Prostate gland (tissue), 2 donors: ENCODE measurements at regions of chr22 and their contacts with region 1.

Region 1: GRCh38 chr22:20904008-20904979 is 12.9 kb upstream of the CRKL start:
- DNase-seq: no peak
- H3K4me3 ChIP-seq: no peak overlapping the region
- H3K27ac ChIP-seq: no peak overlapping the region
- H3K4me1 ChIP-seq: no peaks in the 10 kb centered on the region
- H3K27me3 ChIP-seq: no peaks in the 10 kb centered on the region
- CTCF ChIP-seq: no peak
- POLR2A ChIP-seq: no peak

Region 2: GRCh38 chr22:20509344-20510047 is 394.8 kb before region 1 on chr22:
- intact Hi-C with region 1: no loop called
- DNase-seq: peak; percentile 67
- H3K4me3 ChIP-seq: peak overlapping the region in 1 of 2 donors; percentile 92
- H3K27ac ChIP-seq: peak overlapping the region; percentile 93 to 94
- H3K4me1 ChIP-seq: peaks cover 15% of the 10 kb centered on the region
- H3K27me3 ChIP-seq: no peaks in the 10 kb centered on the region
- CTCF ChIP-seq: no peak
- POLR2A ChIP-seq: no peak

Region 3: DNA sequence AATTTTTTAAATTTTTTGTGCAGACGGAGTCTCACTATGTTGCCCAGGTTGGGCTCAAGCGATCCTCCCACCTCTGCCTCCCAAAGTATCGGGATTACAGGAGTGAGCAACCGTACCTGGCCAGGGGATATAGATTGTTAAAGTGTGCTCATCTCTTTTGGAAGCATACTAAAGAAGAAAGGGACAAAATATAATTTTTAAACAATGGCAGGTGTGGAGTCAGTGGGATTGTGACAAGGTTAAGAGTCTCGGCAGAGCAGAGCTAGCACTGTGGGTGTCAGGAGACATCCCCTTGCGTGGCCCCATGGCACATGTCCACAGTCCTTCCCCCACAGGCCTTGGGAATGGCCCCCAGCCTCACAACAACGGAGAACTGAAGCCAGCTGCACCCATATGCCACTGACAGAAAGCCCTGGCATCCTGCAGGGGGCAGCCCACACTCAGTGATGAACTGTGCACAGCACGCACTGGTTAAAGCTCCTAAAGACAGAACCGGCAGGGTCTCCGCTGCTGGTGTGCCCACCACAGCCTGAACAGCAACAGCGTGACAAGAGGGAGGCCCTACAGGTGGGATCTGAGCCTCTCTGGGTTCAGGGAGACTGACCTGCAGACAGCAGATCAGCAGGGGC is 100.5 kb before region 1 on chr22:
- intact Hi-C with region 1: no loop called
- DNase-seq: no peak
- H3K4me3 ChIP-seq: no peak overlapping the region
- H3K27ac ChIP-seq: no peak overlapping the region
- H3K4me1 ChIP-seq: no peaks in the 10 kb centered on the region
- H3K27me3 ChIP-seq: no peaks in the 10 kb centered on the region
- CTCF ChIP-seq: peak in 1 of 4 experiments; percentile 32
- POLR2A ChIP-seq: no peak

Region 4: DNA sequence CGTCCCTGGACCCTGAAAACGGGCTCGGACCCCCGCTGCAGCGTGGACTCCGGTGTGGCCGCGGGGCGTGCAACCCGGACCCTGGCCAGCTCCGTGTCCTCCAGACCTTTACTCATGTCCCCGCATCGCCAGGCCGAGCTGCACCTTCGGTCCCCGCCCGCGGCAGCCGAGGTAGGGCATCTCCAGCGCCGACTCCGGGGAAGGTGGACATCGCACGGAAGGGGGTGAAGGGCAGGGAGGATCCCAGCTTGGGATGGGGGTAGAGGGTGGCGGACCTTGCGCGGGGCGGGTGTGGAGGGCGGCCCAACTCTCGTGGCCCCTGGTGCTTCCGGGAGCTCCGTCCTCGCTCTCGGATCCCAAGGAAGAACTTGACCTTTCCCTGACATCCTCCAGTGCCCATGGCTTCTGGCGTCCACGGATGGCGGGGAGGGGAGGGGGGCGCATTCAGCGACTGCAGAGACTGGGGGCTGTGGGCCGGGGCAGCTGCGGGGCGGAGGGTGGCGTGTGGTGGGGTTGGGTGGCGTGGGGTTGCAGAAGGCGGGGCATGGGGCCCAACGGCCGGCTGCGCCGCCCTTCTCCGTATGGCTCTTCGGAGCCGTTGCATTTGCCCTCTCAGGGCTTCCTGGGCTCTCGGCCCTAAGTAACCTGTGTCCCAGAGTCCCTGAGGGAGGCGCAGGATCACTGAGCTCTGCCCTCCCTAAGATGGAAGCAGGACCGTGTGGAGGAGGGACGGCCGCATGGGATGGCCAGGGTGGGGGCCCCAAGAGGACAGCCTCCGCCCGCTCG is 53.2 kb after region 1 on chr22:
- intact Hi-C with region 1: loop called (anchors 10 kb)
- DNase-seq: no peak
- H3K4me3 ChIP-seq: peak overlapping the region; percentile 55 to 58
- H3K27ac ChIP-seq: peak overlapping the region; percentile 61 to 77
- H3K4me1 ChIP-seq: peaks cover 4% of the 10 kb centered on the region
- H3K27me3 ChIP-seq: no peaks in the 10 kb centered on the region
- CTCF ChIP-seq: no peak
- POLR2A ChIP-seq: no peak